ENCODE measurements at regions of chr22 and their contacts with region 1.

Region 1: DNA sequence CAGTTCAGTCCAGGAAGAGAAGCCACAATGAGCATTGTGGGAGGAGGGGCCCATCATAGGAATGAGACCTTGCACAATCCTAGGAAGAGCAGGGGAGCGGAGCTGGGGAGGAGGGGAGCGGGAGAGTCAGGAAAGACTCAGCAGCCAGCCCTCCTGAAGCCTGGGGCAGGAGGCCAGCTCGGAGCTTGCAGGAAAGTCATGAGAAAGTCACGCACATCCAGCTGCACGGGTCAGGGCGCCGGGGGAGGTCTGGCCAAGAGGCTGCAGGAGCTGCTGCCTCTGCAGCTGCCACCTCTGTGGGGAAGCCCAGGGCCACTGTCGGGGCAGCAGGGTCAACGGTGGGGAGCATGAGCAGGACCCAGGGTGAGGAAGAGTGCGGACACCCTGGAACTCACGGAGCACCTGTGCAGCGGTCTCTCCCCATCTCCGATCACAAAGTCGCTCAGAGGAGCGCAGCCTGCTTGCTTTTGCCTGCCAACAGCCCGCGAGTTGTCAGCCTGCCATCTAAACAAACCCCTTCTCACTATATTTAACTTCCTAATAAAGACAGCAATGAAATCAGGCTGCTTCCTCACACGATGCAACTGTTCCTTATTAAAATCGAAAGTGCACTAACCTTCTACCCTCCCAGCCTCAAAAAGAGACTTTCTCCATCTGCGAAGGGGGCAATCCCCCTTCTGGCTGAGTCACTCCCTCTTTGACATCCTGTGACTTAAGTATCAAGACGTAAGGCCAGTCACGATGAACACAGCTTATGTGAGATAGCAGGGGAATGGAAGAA is 52.9 kb upstream of the RTL6 start:
- DNase-seq: peak; percentile 93
- H3K4me3 Mint-ChIP-seq: peak overlapping the region; percentile 48
- H3K27ac Mint-ChIP-seq: no peak overlapping the region
- H3K4me1 Mint-ChIP-seq: peaks cover 17% of the 10 kb centered on the region
- H3K27me3 Mint-ChIP-seq: peaks cover 22% of the 10 kb centered on the region
- CTCF ChIP-seq: no peak

Region 2: DNA sequence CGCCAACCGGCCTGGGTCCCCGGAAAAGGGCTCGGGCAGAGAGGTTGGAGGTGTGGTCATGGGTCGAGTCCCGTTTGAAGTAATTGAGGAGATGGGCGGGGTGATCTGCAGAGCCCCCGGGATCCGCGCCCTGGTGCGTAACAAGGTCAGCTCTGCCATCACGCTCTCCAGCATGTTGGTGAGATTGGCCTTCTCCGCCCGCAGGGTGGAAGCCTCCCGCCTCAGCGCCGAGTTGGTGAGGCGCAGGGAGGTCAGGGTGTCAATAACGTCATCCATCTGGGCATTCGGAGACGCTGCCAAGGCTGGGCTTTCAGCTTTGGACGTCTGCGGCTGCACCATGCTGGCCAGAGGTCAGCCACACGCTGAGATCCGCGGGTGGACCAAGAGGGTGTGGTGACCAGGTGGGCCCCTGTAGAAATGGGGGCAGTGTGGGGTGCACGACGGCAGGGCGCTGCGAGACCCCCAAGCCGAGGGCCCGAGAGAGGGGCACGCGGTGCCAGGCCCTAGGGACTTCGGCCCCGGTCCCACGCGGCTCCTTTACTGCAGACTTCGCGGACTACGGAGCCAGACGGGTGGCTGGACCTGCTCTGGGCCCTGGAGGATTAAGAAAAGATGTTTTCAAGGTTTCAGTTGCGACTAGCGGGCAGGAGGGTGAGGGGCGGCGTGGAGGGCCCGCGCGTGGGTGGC is 53.5 kb before region 1 on chr22:
- CTCF ChIA-PET with region 1: no interaction called
- POLR2A ChIA-PET with region 1: no interaction called
- intact Hi-C with region 1: loop called (anchors 10 kb)
- DNase-seq: no peak
- H3K4me3 Mint-ChIP-seq: peak overlapping the region; percentile 76
- H3K27ac Mint-ChIP-seq: peak overlapping the region; percentile 69
- H3K4me1 Mint-ChIP-seq: peaks cover 6% of the 10 kb centered on the region
- H3K27me3 Mint-ChIP-seq: no peaks in the 10 kb centered on the region
- CTCF ChIP-seq: no peak

Region 3: GRCh38 chr22:44616882-44617655 is 66.2 kb after region 1 on chr22:
- CTCF ChIA-PET with region 1: no interaction called
- POLR2A ChIA-PET with region 1: no interaction called
- intact Hi-C with region 1: no loop called
- DNase-seq: no peak
- H3K4me3 Mint-ChIP-seq: no peak overlapping the region
- H3K27ac Mint-ChIP-seq: no peak overlapping the region
- H3K4me1 Mint-ChIP-seq: no peaks in the 10 kb centered on the region
- H3K27me3 Mint-ChIP-seq: no peaks in the 10 kb centered on the region
- CTCF ChIP-seq: no peak

Region 4: DNA sequence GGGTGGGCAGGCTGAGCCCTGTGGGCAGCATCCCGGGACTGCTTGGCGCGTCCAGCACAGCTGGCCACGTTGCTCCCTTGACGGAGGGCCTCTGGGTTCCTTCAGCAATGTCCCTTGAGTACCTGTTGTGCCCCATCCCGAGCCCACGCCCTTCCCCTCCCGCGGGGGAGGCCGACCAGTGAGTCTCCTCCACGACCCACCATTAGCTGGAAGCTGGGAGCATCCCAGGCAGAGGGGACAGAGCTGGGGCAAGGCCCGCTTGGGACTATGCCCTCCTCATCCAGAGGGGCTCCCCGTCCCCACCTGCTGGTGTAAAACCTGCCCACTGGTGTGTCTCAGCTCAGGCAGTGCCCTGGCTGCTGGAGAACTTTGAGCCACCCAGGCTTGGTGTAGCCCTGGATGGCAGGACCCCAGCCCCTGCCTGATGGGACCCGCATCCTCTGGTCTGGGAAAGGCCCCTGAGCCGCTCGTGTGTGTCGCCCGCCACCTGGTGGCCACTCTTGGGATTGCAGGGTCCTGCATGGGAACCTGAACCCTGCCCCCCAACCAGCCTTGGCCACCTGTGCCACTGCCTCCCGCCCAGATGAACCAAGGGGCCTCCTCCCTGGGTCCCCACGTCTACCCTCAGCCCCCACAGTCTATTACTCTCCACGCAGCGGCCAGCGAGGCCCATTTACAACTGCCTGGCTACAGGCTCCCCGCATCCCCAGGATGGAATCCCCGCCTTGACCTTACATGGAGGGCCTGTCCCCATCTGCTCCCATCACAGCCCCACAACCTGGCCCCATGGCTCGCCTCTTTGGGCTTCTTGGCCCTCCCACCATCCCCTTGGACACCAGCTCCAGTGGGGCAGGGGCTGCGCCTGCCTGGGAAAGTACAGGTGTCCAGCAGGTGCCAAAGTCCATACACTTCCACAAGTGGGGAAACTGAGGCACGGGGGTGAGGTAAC is 184.9 kb after region 1 on chr22:
- CTCF ChIA-PET with region 1: no interaction called
- POLR2A ChIA-PET with region 1: no interaction called
- intact Hi-C with region 1: no loop called
- DNase-seq: peak; percentile 56
- H3K4me3 Mint-ChIP-seq: no peak overlapping the region
- H3K27ac Mint-ChIP-seq: no peak overlapping the region
- H3K4me1 Mint-ChIP-seq: no peaks in the 10 kb centered on the region
- H3K27me3 Mint-ChIP-seq: no peaks in the 10 kb centered on the region
- CTCF ChIP-seq: peak; percentile 96

Measured in MCF 10A (cell line).